PC-9 (cell line): ENCODE measurements at regions of chr11 and their contacts with region 1.

Region 1: GRCh38 chr11:77981346-77981947 is 13.0 kb downstream of the INTS4 start:
- DNase-seq: no peak
- H3K4me3 ChIP-seq: no peak overlapping the region
- H3K27ac ChIP-seq: no peak overlapping the region
- H3K4me1 ChIP-seq: no peaks in the 10 kb centered on the region
- H3K27me3 ChIP-seq: no peaks in the 10 kb centered on the region
- CTCF ChIP-seq: no peak

Region 2: DNA sequence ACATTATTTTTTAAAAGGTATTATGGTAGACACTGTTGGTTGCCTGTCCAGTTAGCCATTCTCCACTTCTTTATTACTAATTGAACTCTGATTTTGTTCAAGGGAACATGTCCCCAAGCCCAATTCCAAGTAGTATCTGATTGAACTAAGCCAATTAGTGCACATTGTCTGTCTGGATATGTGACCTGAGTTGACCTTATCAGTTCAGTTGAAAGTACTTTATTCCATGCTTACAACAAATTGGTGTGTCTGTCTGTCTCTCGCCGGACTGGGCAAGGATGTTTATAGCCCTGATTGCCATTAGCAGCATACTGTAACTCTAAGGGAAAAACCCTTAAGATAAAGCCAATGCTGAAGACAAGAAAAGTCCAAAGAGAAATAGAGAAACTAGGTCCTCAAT is 72.6 kb before region 1 on chr11:
- CTCF ChIA-PET with region 1: no interaction called
- POLR2A ChIA-PET with region 1: no interaction called
- intact Hi-C with region 1: no loop called
- DNase-seq: no peak
- H3K4me3 ChIP-seq: no peak overlapping the region
- H3K27ac ChIP-seq: no peak overlapping the region
- H3K4me1 ChIP-seq: peaks cover under 1% of the 10 kb centered on the region
- H3K27me3 ChIP-seq: no peaks in the 10 kb centered on the region
- CTCF ChIP-seq: no peak

Region 3: GRCh38 chr11:78039919-78040671 is 58.6 kb after region 1 on chr11:
- CTCF ChIA-PET with region 1: no interaction called
- POLR2A ChIA-PET with region 1: interaction called, 31 read pairs
- intact Hi-C with region 1: no loop called
- DNase-seq: peak; percentile 87 to 92
- H3K4me3 ChIP-seq: peak overlapping the region; percentile 37; the same call in 1 of the 2 replicates
- H3K27ac ChIP-seq: peak overlapping the region; percentile 90
- H3K4me1 ChIP-seq: peaks cover 54% of the 10 kb centered on the region
- H3K27me3 ChIP-seq: no peaks in the 10 kb centered on the region
- CTCF ChIP-seq: no peak

Region 4: GRCh38 chr11:78467931-78468330 is 486.5 kb after region 1 on chr11:
- CTCF ChIA-PET with region 1: interaction called, 11 read pairs
- POLR2A ChIA-PET with region 1: no interaction called
- intact Hi-C with region 1: no loop called
- DNase-seq: no peak
- H3K4me3 ChIP-seq: no peak overlapping the region
- H3K27ac ChIP-seq: no peak overlapping the region
- H3K4me1 ChIP-seq: no peaks in the 10 kb centered on the region
- H3K27me3 ChIP-seq: no peaks in the 10 kb centered on the region
- CTCF ChIP-seq: no peak